ENCODE measurements at regions of chr1 and their contacts with region 1.

Region 1: GRCh38 chr1:151399890-151400495 is 620 bp downstream of the PSMB4 start:
- DNase-seq: no peak
- ATAC-seq: peak; percentile 10 to 56 (median 34)
- H3K4me3 ChIP-seq: peak overlapping the region; percentile 72 to 99 (median 86)
- H3K27ac ChIP-seq: peak overlapping the region; percentile 73 to 94 (median 91)
- H3K4me1 ChIP-seq: peaks cover 7 to 23% (median 15%) of the 10 kb centered on the region in 9 donors
- H3K27me3 ChIP-seq: no peaks in the 10 kb centered on the region
- CTCF ChIP-seq: no peak

Region 2: DNA sequence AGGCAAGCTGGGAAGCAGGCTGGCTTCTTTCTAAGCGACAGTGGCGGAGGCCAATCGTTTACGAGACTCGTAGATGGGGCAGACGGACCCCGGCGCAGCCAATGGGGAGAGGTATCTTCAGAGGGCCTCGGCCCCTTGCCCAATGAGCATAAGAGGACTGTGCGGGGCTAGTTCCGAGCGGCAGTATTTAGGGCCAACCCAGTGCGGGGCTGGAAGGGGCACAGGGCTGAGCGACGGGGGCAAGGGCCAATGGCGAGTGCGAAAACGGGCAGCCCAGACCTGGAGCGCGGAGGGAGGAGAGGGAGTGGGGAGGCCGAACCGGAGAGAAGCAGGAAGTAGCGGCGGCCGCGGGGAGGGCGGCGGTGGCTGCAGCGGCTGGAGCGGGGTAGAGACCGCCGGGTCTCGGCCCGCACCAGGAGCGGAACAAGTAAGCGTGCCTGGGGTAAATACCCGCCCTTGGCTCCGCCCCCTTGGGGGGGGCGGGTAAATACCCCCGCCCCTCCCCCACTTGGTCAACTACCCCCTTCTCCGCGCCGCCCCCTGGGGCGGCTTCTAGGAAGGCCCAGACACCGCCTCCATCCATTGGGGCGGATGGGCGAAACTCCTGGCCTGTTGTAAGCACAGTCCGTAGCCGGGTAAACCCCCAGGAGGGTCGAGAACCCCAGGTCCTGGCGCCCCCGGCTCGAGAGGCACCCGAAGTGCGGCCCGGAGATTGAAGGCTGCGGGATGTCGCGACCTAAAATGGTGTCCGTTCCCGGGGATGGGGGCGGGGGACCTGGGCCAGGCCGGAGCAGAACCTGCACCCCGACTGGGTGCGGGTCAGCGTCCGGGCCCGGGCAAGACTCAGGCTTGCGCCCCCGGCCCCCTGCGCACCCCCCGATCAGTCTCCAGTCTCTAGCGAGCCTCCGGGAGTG is 117.8 kb before region 1 on chr1 and contains the start of gene ZNF687:
- intact Hi-C with region 1: loop called in 2 of 10 experiments (anchors 1 to 5 kb)
- DNase-seq: peak; percentile 100
- ATAC-seq: peak; percentile 90 to 96 (median 94)
- H3K4me3 ChIP-seq: peak within 1 kb of the TSS; percentile 73 to 96 (median 86)
- H3K27ac ChIP-seq: peak within 1 kb of the TSS; percentile 94 to 99 (median 97)
- H3K4me1 ChIP-seq: peaks cover 0 to 36% (median 20%) of the 10 kb centered on the region in 9 donors
- H3K27me3 ChIP-seq: no peaks in the 10 kb centered on the region
- CTCF ChIP-seq: peak in 1 of 9 donors; percentile 13
- total RNA-seq, gene ZNF687: 10.4 to 15.1 (median 13.1) TPM

Region 3: DNA sequence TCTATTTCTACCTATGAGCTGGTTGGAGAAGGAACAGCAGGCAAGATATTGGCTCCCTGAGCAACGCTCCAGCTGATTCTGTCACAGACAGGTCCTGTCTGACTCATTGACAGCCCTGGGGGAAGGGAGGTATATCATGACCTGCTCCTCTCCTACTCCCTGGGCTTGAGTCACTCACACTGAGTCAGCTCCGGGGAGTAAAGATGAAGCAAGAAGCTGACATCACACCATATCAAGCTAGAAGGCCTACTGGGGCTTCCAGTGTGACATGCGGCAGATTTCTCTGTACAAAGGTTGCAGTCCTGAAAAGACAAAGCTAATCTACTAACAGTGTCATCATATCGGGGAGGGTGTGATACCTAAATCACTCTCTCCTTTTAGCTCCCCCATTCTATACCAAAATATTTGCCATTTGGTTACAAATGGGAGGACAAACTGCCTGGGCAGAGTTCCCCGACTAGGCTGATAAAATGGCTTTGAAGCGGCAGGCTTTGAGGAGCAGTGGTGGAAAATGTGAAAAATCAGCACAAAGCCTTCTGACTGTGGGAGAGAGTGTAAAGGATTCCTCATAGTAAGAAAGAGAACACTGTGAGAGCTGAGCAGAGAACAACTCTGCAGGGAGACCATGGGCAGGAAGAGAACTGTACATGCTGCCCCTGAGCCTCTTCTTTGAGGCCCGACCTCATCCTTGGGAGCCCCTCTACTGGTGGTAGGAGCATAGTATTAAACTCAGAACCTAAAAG is 88.2 kb before region 1 on chr1:
- intact Hi-C with region 1: loop called in 4 of 10 experiments (anchors 5 to 10 kb)
- DNase-seq: peak; percentile 33 to 74
- ATAC-seq: peak; percentile 75 to 95 (median 86)
- H3K4me3 ChIP-seq: no peak overlapping the region
- H3K27ac ChIP-seq: peak overlapping the region in 9 of 10 donors; percentile 58 to 91 (median 71)
- H3K4me1 ChIP-seq: peaks cover 38 to 82% (median 67%) of the 10 kb centered on the region in 9 donors
- H3K27me3 ChIP-seq: no peaks in the 10 kb centered on the region
- CTCF ChIP-seq: no peak

Region 4: GRCh38 chr1:151346769-151347522 is 53.0 kb before region 1 on chr1 and contains the start of gene RFX5:
- intact Hi-C with region 1: loop called in 6 of 10 experiments (anchors 2 to 10 kb)
- DNase-seq: peak; percentile 89 to 95
- ATAC-seq: peak; percentile 96 to 99 (median 98)
- H3K4me3 ChIP-seq: peak within 1 kb of the TSS; percentile 56 to 82 (median 68)
- H3K27ac ChIP-seq: peak within 1 kb of the TSS; percentile 16 to 95 (median 89)
- H3K4me1 ChIP-seq: peaks cover 0 to 25% (median 13%) of the 10 kb centered on the region in 9 donors
- H3K27me3 ChIP-seq: no peaks in the 10 kb centered on the region
- CTCF ChIP-seq: no peak
- total RNA-seq, gene RFX5: 12.6 to 38.4 (median 24.0) TPM

Measured in heart right ventricle (tissue), 16 donors.